GM12878 (cell line): ENCODE measurements at regions of chr12 and their contacts with region 1.

Region 1: GRCh38 chr12:51025836-51026638 is at the start of gene SLC11A2:
- DNase-seq: peak; percentile 72
- ATAC-seq: peak; percentile 97
- H3K4me3 ChIP-seq: peak within 1 kb of the TSS; percentile 71
- H3K27ac ChIP-seq: peak within 1 kb of the TSS; percentile 74
- H3K4me1 ChIP-seq: peaks cover 14% of the 10 kb centered on the region; the same call in 1 of the 2 replicates
- H3K27me3 ChIP-seq: no peaks in the 10 kb centered on the region; a peak in 1 of 4 replicates
- CTCF ChIP-seq: peak; percentile 7 to 13 (median 12); a peak in 2 of 6 replicates
- EP300 ChIP-seq: no peak
- POLR2A ChIP-seq: peak; percentile 83
- RAD21 ChIP-seq: no peak
- polyA plus RNA-seq, gene SLC11A2: 6.2 to 9.0 TPM

Region 2: GRCh38 chr12:50452795-50453194 is 573.2 kb before region 1 on chr12:
- CTCF ChIA-PET with region 1: no interaction called
- POLR2A ChIA-PET with region 1: no interaction called
- RAD21 ChIA-PET with region 1: no interaction called
- SMC1A ChIA-PET with region 1: no interaction called
- in situ Hi-C with region 1: no loop called
- intact Hi-C with region 1: no loop called
- DNase-seq: no peak
- ATAC-seq: no peak
- H3K4me3 ChIP-seq: no peak overlapping the region
- H3K27ac ChIP-seq: no peak overlapping the region
- H3K4me1 ChIP-seq: no peaks in the 10 kb centered on the region
- H3K27me3 ChIP-seq: no peaks in the 10 kb centered on the region
- CTCF ChIP-seq: no peak
- EP300 ChIP-seq: no peak
- POLR2A ChIP-seq: no peak
- RAD21 ChIP-seq: no peak

Region 3: DNA sequence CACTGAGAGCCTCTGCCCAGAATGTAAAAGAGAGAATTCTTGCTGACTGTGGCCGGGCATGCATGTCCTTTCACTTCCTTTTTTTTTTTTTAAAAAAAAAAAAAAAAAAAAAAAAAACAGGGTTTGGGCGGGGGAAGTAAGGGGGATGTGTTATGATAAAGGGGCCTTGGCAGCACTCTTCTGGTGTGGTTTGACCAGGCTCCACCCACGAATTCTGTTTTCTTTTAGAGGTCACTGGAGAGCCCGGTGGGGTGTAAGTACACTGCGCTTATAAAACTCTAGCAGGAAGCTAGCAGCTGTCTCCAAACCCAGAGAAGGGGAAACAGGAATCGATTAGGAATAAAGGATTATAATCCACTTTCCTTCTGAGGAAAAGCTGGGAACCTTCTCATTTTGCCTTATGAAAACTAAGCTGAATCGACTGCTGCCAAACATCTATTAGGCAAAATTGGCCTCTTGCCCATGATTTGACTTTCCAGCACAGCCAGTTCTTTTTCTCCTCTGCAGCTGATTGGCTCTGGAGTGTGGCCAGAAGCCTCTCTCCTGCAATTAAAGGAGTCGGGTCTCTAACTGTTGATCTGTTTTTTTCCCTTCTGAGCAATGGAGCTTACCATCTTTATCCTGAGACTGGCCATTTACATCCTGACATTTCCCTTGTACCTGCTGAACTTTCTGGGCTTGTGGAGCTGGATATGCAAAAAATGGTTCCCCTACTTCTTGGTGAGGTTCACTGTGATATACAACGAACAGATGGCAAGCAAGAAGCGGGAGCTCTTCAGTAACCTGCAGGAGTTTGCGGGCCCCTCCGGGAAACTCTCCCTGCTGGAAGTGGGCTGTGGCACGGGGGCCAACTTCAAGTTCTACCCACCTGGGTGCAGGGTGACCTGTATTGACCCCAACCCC is 101.3 kb before region 1 on chr12:
- CTCF ChIA-PET with region 1: interaction called, 6 read pairs
- POLR2A ChIA-PET with region 1: no interaction called
- RAD21 ChIA-PET with region 1: no interaction called
- SMC1A ChIA-PET with region 1: no interaction called
- in situ Hi-C with region 1: no loop called
- intact Hi-C with region 1: loop called (anchors 5 kb)
- DNase-seq: peak; percentile 76
- ATAC-seq: peak; percentile 94
- H3K4me3 ChIP-seq: peak overlapping the region; percentile 60
- H3K27ac ChIP-seq: peak overlapping the region; percentile 3; the same call in 1 of the 2 replicates
- H3K4me1 ChIP-seq: peaks cover 26% of the 10 kb centered on the region
- H3K27me3 ChIP-seq: no peaks in the 10 kb centered on the region
- CTCF ChIP-seq: no peak
- EP300 ChIP-seq: peak; percentile 61 to 71; a peak in 3 of 4 replicates
- POLR2A ChIP-seq: no peak
- RAD21 ChIP-seq: no peak

Region 4: GRCh38 chr12:50986966-50987737 is 38.9 kb before region 1 on chr12:
- CTCF ChIA-PET with region 1: interaction called, 12 read pairs
- POLR2A ChIA-PET with region 1: interaction called, 3 read pairs
- RAD21 ChIA-PET with region 1: interaction called, 14 read pairs
- SMC1A ChIA-PET with region 1: interaction called, 14 read pairs
- in situ Hi-C with region 1: no loop called
- intact Hi-C with region 1: no loop called
- DNase-seq: no peak
- ATAC-seq: peak; percentile 69
- H3K4me3 ChIP-seq: no peak overlapping the region
- H3K27ac ChIP-seq: no peak overlapping the region
- H3K4me1 ChIP-seq: peaks cover 17% of the 10 kb centered on the region
- H3K27me3 ChIP-seq: no peaks in the 10 kb centered on the region
- CTCF ChIP-seq: peak; percentile 45 to 68 (median 64); a peak in 5 of 6 replicates
- EP300 ChIP-seq: no peak
- POLR2A ChIP-seq: no peak
- RAD21 ChIP-seq: peak; percentile 77

Region 5: DNA sequence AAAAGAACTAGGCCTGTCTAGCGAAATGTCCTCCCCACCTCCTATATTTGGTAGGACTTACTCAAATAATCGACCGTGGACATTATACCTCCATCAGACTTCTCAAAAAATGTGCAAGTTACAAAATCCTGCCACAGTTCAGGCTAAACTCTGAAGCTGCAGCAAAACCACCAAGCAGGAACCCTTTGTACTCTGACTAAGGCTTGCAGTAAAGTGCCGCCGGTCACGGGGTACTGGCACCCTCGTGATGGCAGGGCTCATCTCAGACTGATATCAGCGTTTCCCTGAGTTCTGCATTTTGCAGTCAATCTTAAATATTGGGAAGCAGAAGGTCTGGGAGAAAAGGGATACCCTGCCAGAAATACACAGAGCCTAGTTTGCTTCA is 17.0 kb before region 1 on chr12:
- CTCF ChIA-PET with region 1: interaction called, 11 read pairs
- POLR2A ChIA-PET with region 1: interaction called, 5 read pairs
- RAD21 ChIA-PET with region 1: interaction called, 7 read pairs
- SMC1A ChIA-PET with region 1: interaction called, 13 read pairs
- in situ Hi-C with region 1: no loop called
- intact Hi-C with region 1: no loop called
- DNase-seq: no peak
- ATAC-seq: peak; percentile 67
- H3K4me3 ChIP-seq: no peak overlapping the region
- H3K27ac ChIP-seq: no peak overlapping the region; the same call in 1 of the 2 replicates
- H3K4me1 ChIP-seq: no peaks in the 10 kb centered on the region; the same call in 1 of the 2 replicates
- H3K27me3 ChIP-seq: no peaks in the 10 kb centered on the region
- CTCF ChIP-seq: no peak
- EP300 ChIP-seq: no peak
- POLR2A ChIP-seq: no peak
- RAD21 ChIP-seq: no peak